ENCODE measurements at regions of chr9 and their contacts with region 1.

Region 1: GRCh38 chr9:5442400-5443011 is 4.8 kb upstream of the PLGRKT start:
- DNase-seq: peak in 1 of 2 experiments; percentile 49
- H3K4me3 ChIP-seq: no peak overlapping the region
- H3K27ac ChIP-seq: no peak overlapping the region
- H3K4me1 ChIP-seq: peaks cover 0 to 6% (median 2%) of the 10 kb centered on the region in 4 experiments; a peak in 3 of 7 replicates
- H3K27me3 ChIP-seq: no peaks in the 10 kb centered on the region
- CTCF ChIP-seq: peak in 2 of 3 experiments; percentile 58 to 60; a peak in 3 of 4 replicates
- EP300 ChIP-seq: no peak
- POLR2A ChIP-seq: no peak
- RAD21 ChIP-seq: peak; percentile 64 to 74

Region 2: DNA sequence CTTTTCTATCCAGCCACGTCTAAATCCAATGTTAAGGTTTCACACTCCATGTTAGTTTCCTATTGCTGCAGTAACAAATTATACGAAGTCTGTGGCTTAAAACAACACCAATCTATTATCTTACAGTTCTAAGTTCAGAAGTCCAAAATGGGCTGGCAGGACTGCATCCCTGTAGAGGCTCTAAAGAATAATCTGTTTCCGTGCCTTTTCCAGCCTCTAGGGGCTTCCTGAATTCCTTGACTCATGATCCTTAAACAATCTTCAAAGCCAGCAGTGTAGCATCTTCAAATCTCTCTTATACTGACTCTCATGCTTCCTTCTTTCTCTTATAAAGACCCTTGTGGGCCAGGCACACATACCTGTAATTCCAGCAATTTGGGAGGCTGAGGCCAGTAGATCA is 11.6 kb before region 1 on chr9:
- CTCF ChIA-PET with region 1: interaction called, 11 read pairs
- POLR2A ChIA-PET with region 1: interaction called, 4 read pairs
- DNase-seq: no peak
- H3K4me3 ChIP-seq: no peak overlapping the region
- H3K27ac ChIP-seq: no peak overlapping the region
- H3K4me1 ChIP-seq: no peaks in the 10 kb centered on the region
- H3K27me3 ChIP-seq: no peaks in the 10 kb centered on the region
- CTCF ChIP-seq: peak in 1 of 3 experiments; percentile 19; a peak in 1 of 4 replicates
- EP300 ChIP-seq: no peak
- POLR2A ChIP-seq: no peak
- RAD21 ChIP-seq: no peak

Region 3: GRCh38 chr9:5536684-5537083 is 94.2 kb after region 1 on chr9:
- CTCF ChIA-PET with region 1: no interaction called
- POLR2A ChIA-PET with region 1: no interaction called
- DNase-seq: no peak
- H3K4me3 ChIP-seq: no peak overlapping the region
- H3K27ac ChIP-seq: no peak overlapping the region
- H3K4me1 ChIP-seq: peaks cover 0 to 2% (median 0%) of the 10 kb centered on the region in 4 experiments; a peak in 1 of 7 replicates
- H3K27me3 ChIP-seq: no peaks in the 10 kb centered on the region
- CTCF ChIP-seq: no peak
- EP300 ChIP-seq: no peak
- POLR2A ChIP-seq: no peak
- RAD21 ChIP-seq: no peak

Region 4: DNA sequence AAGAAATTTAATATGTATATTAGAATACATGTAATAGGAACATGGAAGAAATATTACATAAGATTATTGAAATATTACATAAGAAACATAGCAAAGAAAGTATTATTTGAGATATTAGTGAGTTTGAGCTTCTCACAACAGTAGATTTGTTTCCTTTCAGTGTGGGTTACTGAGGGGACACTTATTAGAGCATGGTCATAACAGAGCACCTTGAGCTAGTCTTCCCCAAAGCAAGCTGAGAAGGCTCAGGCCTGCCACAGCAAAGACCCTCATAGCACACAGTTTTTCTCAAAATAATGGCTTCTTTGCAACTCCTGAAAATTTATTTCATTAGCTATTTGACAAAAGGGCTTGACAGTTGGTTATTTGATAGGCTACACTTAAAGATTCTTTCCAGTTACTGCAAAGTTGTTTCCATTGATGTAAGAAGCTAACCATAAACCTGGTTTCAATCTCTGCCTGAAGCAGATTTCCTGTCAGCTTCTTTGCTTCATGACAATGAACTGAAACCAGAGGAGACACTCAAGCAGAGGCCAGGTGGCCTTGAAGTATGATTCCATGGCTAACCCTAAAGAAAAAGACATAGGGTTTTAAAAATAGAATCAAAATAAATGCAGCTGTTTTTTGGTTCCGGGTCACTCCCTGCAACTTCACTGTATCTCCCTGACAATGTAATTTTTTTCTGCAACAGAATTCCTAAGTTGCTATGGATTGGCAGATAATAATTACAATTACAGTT is 321.8 kb after region 1 on chr9:
- CTCF ChIA-PET with region 1: no interaction called
- POLR2A ChIA-PET with region 1: no interaction called
- DNase-seq: no peak
- H3K4me3 ChIP-seq: no peak overlapping the region
- H3K27ac ChIP-seq: no peak overlapping the region
- H3K4me1 ChIP-seq: no peaks in the 10 kb centered on the region
- H3K27me3 ChIP-seq: no peaks in the 10 kb centered on the region
- CTCF ChIP-seq: no peak
- EP300 ChIP-seq: no peak
- POLR2A ChIP-seq: no peak
- RAD21 ChIP-seq: no peak

Measured in H1 (cell line).